ENCODE measurements at regions of chr16 and their contacts with region 1.

Region 1: DNA sequence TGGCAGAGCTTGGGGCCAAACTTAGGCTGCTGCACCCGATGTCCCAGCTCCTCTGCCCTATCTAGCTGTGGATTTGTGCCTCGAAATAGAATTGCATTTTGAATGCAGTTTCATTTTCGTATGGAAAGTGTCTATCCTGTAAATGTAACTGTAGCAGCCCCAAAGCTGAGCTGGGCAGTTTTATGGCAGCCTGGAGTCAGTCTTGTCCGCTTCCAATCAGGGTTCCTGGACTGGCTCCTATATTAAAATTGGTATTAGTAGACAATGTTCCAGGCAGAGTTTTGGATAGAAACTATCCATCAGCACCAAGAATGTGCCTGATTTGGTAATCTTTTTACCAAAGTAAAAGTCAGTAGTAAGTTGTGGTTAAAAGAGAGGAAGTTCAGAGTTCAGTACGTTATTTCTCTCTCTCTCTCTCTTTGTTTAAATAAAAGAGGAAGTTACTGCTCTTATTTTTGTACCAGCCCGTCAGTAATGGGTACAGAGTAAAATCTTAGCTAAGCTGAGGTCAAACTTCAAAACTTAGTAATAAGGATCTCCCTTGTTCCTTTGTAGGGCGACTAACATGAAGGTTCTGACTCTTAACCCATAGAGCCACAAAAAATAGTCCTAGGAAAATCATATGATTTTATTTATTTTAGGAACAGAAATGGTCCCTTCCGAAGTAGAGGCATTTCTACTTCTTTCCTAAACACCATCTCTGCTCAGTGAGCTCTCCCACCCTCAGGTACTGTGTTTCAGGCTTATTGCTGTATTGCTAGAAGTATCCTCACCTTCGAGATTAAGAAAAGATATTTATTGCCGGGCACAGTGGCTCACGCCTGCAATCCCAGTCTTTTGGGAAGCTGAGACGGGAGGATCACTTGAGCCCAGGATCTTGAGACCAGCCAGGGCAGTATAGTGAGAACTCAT is 28.0 kb downstream of the PRKCB start:
- DNase-seq: peak; percentile 30
- H3K4me3 Mint-ChIP-seq: peak overlapping the region; percentile 84
- H3K27ac Mint-ChIP-seq: peak overlapping the region; percentile 91
- H3K4me1 Mint-ChIP-seq: peaks cover 82% of the 10 kb centered on the region
- H3K27me3 Mint-ChIP-seq: no peaks in the 10 kb centered on the region

Region 2: GRCh38 chr16:23788685-23789084 is 75.1 kb before region 1 on chr16:
- intact Hi-C with region 1: no loop called
- DNase-seq: no peak
- H3K4me3 Mint-ChIP-seq: no peak overlapping the region
- H3K27ac Mint-ChIP-seq: no peak overlapping the region
- H3K4me1 Mint-ChIP-seq: no peaks in the 10 kb centered on the region
- H3K27me3 Mint-ChIP-seq: peaks cover 17% of the 10 kb centered on the region

Region 3: DNA sequence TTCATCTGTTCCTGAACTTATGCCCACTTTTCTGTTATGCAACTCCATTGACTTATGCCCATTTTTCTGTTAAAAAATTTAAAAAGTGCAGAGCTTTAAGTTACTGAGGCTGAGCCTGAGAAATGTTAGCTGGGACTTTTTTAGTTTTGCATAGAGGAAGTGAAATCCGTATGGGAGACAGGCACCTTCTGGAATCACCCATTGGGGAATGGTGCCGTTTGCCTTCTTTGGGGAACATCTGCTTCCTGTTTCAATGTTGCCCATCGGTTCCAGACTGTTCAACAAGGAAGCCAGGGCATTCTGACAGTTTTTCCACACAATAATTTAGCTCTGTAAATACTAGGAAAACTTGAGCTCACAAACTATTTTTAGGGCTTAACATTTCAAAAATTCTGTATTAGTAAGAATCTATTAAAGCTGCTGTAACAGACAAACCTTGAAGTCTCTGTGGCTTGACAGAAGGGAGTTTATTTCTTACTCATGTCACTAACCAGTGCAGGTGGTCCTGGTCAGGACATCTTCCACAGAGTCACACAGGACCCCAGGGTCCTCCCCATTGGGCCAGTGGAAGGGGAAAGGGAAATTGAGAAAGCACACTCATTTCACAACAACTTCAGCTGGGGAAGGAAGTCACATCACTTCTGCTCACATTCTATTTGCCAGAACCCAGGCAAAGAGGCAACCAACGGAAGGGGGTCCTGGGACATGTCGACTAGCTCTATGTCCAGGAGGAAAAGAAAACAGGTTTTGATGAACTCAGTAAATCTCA is 10.8 kb before region 1 on chr16:
- intact Hi-C with region 1: loop called (anchors 1 kb)
- DNase-seq: no peak
- H3K4me3 Mint-ChIP-seq: no peak overlapping the region
- H3K27ac Mint-ChIP-seq: no peak overlapping the region
- H3K4me1 Mint-ChIP-seq: peaks cover 79% of the 10 kb centered on the region
- H3K27me3 Mint-ChIP-seq: no peaks in the 10 kb centered on the region

Measured in activated T-helper 1 cell treated with anti-CD3 and anti-CD28 coated beads, Interleukin-12 subunit alpha, Interleukin-12 subunit beta, Interleukin-2, Interleukin-4 antibody, amounts not matched to agents 30 ng/mL and 10 ng/mL and 1 ng/mL, durations not matched to agents 14 hours and 24 hours and 36 hours (primary cell).